HepG2 (cell line): ENCODE measurements at regions of chr16 and their contacts with region 1.

Region 1: GRCh38 chr16:70380861-70381603 is 34.3 kb downstream of the DDX19A start:
- DNase-seq: peak; percentile 98
- ATAC-seq: peak; percentile 91
- H3K4me3 ChIP-seq: peak overlapping the region; percentile 80 to 94 (median 85)
- H3K27ac ChIP-seq: peak overlapping the region; percentile 78
- H3K4me1 ChIP-seq: peaks cover 24% of the 10 kb centered on the region
- H3K27me3 ChIP-seq: no peaks in the 10 kb centered on the region; a peak in 1 of 5 replicates
- CTCF ChIP-seq: peak; percentile 73
- EP300 ChIP-seq: 0 out of 4 replicates have a peak, but pooled peaks of 1 of the 2 experiments have one; percentile 4
- POLR2A ChIP-seq: peak; percentile 92 to 95
- RAD21 ChIP-seq: peak; percentile 84

Region 2: GRCh38 chr16:68711421-68712139 is 1669.5 kb before region 1 on chr16:
- CTCF ChIA-PET with region 1: no interaction called
- POLR2A ChIA-PET with region 1: no interaction called
- in situ Hi-C with region 1: no loop called
- intact Hi-C with region 1: no loop called
- DNase-seq: no peak
- ATAC-seq: no peak
- H3K4me3 ChIP-seq: peak overlapping the region in 1 of 3 experiments; percentile 4; a peak in 1 of 6 replicates
- H3K27ac ChIP-seq: no peak overlapping the region
- H3K4me1 ChIP-seq: peaks cover 56% of the 10 kb centered on the region
- H3K27me3 ChIP-seq: peaks cover 0 to 22% of the 10 kb centered on the region in 2 experiments; a peak in 2 of 5 replicates
- CTCF ChIP-seq: no peak
- EP300 ChIP-seq: no peak
- POLR2A ChIP-seq: no peak
- RAD21 ChIP-seq: no peak

Region 3: GRCh38 chr16:70298988-70299938 is 81.8 kb before region 1 on chr16 and contains the start of gene DDX19B:
- CTCF ChIA-PET with region 1: no interaction called
- POLR2A ChIA-PET with region 1: interaction called, 10 read pairs
- in situ Hi-C with region 1: no loop called
- intact Hi-C with region 1: no loop called
- DNase-seq: peak; percentile 90
- ATAC-seq: peak; percentile 92
- H3K4me3 ChIP-seq: peak within 1 kb of the TSS; percentile 75 to 91 (median 75)
- H3K27ac ChIP-seq: peak within 1 kb of the TSS; percentile 95
- H3K4me1 ChIP-seq: peaks cover 52% of the 10 kb centered on the region
- H3K27me3 ChIP-seq: no peaks in the 10 kb centered on the region
- CTCF ChIP-seq: peak; percentile 16; the same call in 1 of the 2 replicates
- EP300 ChIP-seq: peak in 1 of 2 experiments; percentile 70; a peak in 3 of 4 replicates
- POLR2A ChIP-seq: peak; percentile 87 to 98
- RAD21 ChIP-seq: no peak; the same call in none of the 2 replicates
- total RNA-seq, gene DDX19B: 36.2 and 45.1 TPM in 2 replicates

Region 4: DNA sequence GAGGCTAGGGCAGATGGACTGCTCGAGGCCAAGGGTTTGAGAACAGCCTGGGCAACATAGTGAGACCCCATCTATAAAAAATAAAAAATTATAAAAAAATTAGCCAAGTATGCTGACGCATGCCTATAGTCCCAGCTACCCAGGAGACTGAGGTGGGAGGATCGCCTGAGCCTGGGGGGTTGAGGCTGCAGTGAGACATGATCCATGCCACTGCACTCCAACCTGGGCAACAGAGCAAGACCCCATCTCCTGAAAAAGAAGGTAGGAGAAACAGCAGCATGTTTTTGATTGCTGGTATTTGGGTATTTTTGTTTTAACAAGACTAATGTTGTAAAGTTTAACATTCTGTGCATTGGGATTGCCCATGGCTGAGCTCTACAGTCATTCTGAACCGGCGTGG is 43.2 kb before region 1 on chr16:
- CTCF ChIA-PET with region 1: no interaction called
- POLR2A ChIA-PET with region 1: no interaction called
- in situ Hi-C with region 1: no loop called
- intact Hi-C with region 1: no loop called
- DNase-seq: no peak
- ATAC-seq: no peak
- H3K4me3 ChIP-seq: no peak overlapping the region
- H3K27ac ChIP-seq: no peak overlapping the region
- H3K4me1 ChIP-seq: no peaks in the 10 kb centered on the region
- H3K27me3 ChIP-seq: no peaks in the 10 kb centered on the region
- CTCF ChIP-seq: no peak
- EP300 ChIP-seq: no peak
- POLR2A ChIP-seq: no peak
- RAD21 ChIP-seq: no peak

Region 5: GRCh38 chr16:70395345-70395901 is 14.4 kb after region 1 on chr16:
- CTCF ChIA-PET with region 1: no interaction called
- POLR2A ChIA-PET with region 1: interaction called, 21 read pairs
- in situ Hi-C with region 1: no loop called
- intact Hi-C with region 1: no loop called
- DNase-seq: peak; percentile 72
- ATAC-seq: peak; percentile 95
- H3K4me3 ChIP-seq: no peak overlapping the region
- H3K27ac ChIP-seq: no peak overlapping the region
- H3K4me1 ChIP-seq: peaks cover 4% of the 10 kb centered on the region; the same call in 1 of the 2 replicates
- H3K27me3 ChIP-seq: no peaks in the 10 kb centered on the region
- CTCF ChIP-seq: peak; percentile 99
- EP300 ChIP-seq: no peak
- POLR2A ChIP-seq: no peak
- RAD21 ChIP-seq: peak; percentile 99

Region 6: DNA sequence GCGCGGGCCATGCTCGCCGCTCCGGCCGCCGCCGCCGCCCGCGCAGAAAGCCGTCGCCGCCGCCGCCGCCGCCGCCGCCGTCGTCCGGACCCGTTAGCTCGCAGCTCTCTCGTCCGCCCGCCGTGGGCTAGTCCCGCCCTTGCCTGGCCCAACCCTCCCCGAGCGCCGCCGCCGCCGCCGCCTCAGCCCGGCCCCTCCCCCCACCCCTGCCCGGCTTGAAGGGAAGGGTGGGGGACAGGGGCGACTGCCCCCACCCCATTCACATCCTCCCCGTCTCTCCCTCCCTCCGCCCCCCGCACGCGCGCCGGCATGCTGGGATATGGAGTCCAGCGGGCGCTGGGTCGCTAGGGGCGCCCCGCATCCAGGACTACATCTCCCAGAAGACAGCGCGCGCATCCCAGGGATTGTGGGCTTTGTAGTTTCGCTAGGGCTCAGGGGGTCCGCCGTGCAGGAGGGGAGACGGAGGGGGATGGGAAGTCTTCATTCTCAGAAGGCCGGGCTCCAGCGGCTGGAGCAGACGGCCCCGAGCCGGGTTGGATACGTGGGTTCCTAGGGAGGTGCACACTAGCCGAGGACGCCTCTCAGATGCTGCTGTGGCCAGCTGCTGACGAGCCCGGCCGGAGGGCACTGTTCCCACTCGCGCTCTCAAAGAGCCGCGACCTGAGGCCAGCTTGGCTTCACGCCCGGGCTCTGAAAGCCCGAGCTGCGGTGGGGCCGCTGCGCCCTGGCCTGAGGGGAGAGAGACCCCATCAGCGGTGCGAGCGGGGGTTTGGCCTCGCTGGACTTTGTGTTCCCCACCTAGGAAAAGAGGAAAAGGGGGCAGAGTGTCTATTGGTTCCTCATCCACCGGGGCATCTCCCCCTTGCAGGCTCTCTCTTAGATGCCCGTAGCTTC is 58.2 kb after region 1 on chr16 and contains the start of gene ST3GAL2:
- CTCF ChIA-PET with region 1: no interaction called
- POLR2A ChIA-PET with region 1: interaction called, 61 read pairs
- in situ Hi-C with region 1: no loop called
- intact Hi-C with region 1: loop called (anchors 2 kb)
- DNase-seq: peak; percentile 93
- ATAC-seq: peak; percentile 88
- H3K4me3 ChIP-seq: peak within 1 kb of the TSS; percentile 82 to 92 (median 89)
- H3K27ac ChIP-seq: peak within 1 kb of the TSS; percentile 69
- H3K4me1 ChIP-seq: peaks cover 66% of the 10 kb centered on the region
- H3K27me3 ChIP-seq: no peaks in the 10 kb centered on the region; a peak in 1 of 5 replicates
- CTCF ChIP-seq: peak; percentile 27
- EP300 ChIP-seq: peak in 1 of 2 experiments; percentile 54; a peak in 2 of 4 replicates
- POLR2A ChIP-seq: peak; percentile 56 to 72; a peak in 3 of 4 replicates
- RAD21 ChIP-seq: peak; percentile 51
- total RNA-seq, gene ST3GAL2: 17.8 and 24.9 TPM in 2 replicates

Region 7: GRCh38 chr16:70470927-70471341 is 89.9 kb after region 1 on chr16:
- CTCF ChIA-PET with region 1: interaction called, 4 read pairs
- POLR2A ChIA-PET with region 1: interaction called, 51 read pairs
- in situ Hi-C with region 1: no loop called
- intact Hi-C with region 1: loop called (anchors 2 kb)
- DNase-seq: peak; percentile 61
- ATAC-seq: peak; percentile 87
- H3K4me3 ChIP-seq: no peak overlapping the region
- H3K27ac ChIP-seq: no peak overlapping the region
- H3K4me1 ChIP-seq: peaks cover 5% of the 10 kb centered on the region; the same call in 1 of the 2 replicates
- H3K27me3 ChIP-seq: no peaks in the 10 kb centered on the region
- CTCF ChIP-seq: peak; percentile 96
- EP300 ChIP-seq: no peak
- POLR2A ChIP-seq: no peak
- RAD21 ChIP-seq: peak; percentile 99

Region 8: GRCh38 chr16:70679666-70680494 is 298.8 kb after region 1 on chr16:
- CTCF ChIA-PET with region 1: no interaction called
- POLR2A ChIA-PET with region 1: interaction called, 13 read pairs
- in situ Hi-C with region 1: no loop called
- intact Hi-C with region 1: no loop called
- DNase-seq: no peak
- ATAC-seq: no peak
- H3K4me3 ChIP-seq: no peak overlapping the region; a peak in 1 of 6 replicates
- H3K27ac ChIP-seq: peak overlapping the region; percentile 91
- H3K4me1 ChIP-seq: peaks cover 39% of the 10 kb centered on the region
- H3K27me3 ChIP-seq: no peaks in the 10 kb centered on the region; a peak in 1 of 5 replicates
- CTCF ChIP-seq: peak; percentile 26; the same call in 1 of the 2 replicates
- EP300 ChIP-seq: no peak
- POLR2A ChIP-seq: no peak
- RAD21 ChIP-seq: peak; percentile 58; the same call in 1 of the 2 replicates